Heart left ventricle (tissue), 16 donors: ENCODE measurements at regions of chr5 and their contacts with region 1.

Region 1: GRCh38 chr5:103119765-103120606 is at the starts of genes GIN1 and PPIP5K2:
- DNase-seq: peak; percentile 95 to 97 (median 96)
- ATAC-seq: peak; percentile 98 to 100 (median 99)
- H3K4me3 ChIP-seq: peak within 1 kb of the TSS; percentile 58 to 94 (median 80)
- H3K27ac ChIP-seq: peak within 1 kb of the TSS; percentile 89 to 99 (median 92)
- H3K4me1 ChIP-seq: peaks cover 0 to 40% (median 27%) of the 10 kb centered on the region in 12 donors
- H3K27me3 ChIP-seq: no peaks in the 10 kb centered on the region
- CTCF ChIP-seq: no peak
- POLR2A ChIP-seq: peak in 1 of 2 donors; percentile 71
- total RNA-seq, gene GIN1: 8.6 to 17.8 (median 13.3) TPM
- total RNA-seq, gene PPIP5K2: 25.2 to 59.8 (median 39.1) TPM

Region 2: GRCh38 chr5:102754767-102755431 is 365.1 kb before region 1 on chr5 and contains the start of gene PAM:
- intact Hi-C with region 1: loop called in 3 of 10 experiments (anchors 5 to 10 kb)
- DNase-seq: peak; percentile 85 to 92 (median 87)
- ATAC-seq: peak; percentile 85 to 95 (median 94)
- H3K4me3 ChIP-seq: peak within 1 kb of the TSS; percentile 56 to 97 (median 82)
- H3K27ac ChIP-seq: peak within 1 kb of the TSS; percentile 47 to 94 (median 85)
- H3K4me1 ChIP-seq: peaks cover 0 to 44% (median 25%) of the 10 kb centered on the region in 12 donors
- H3K27me3 ChIP-seq: no peaks in the 10 kb centered on the region
- CTCF ChIP-seq: peak in 1 of 12 donors; percentile 9
- POLR2A ChIP-seq: peak in 1 of 2 donors; percentile 53
- total RNA-seq, gene PAM: 578 to 1,548 (median 1,139) TPM

Region 3: GRCh38 chr5:102762095-102762534 is 357.9 kb before region 1 on chr5:
- intact Hi-C with region 1: loop called in 3 of 10 experiments (anchors 5 to 10 kb)
- DNase-seq: no peak
- ATAC-seq: peak in 2 of 4 donors; percentile 17 to 36
- H3K4me3 ChIP-seq: peak overlapping the region in 4 of 12 donors; percentile 8 to 21 (median 11)
- H3K27ac ChIP-seq: peak overlapping the region in 11 of 12 donors; percentile 3 to 72 (median 40)
- H3K4me1 ChIP-seq: peaks cover 4 to 74% (median 50%) of the 10 kb centered on the region in 12 donors
- H3K27me3 ChIP-seq: no peaks in the 10 kb centered on the region
- CTCF ChIP-seq: no peak
- POLR2A ChIP-seq: no peak

Region 4: GRCh38 chr5:103094737-103095136 is 25.2 kb before region 1 on chr5:
- intact Hi-C with region 1: loop called in 1 of 10 experiments (anchors 2 kb)
- DNase-seq: no peak
- ATAC-seq: peak; percentile 49 to 83 (median 75)
- H3K4me3 ChIP-seq: peak overlapping the region in 1 of 12 donors; percentile 21
- H3K27ac ChIP-seq: peak overlapping the region in 11 of 12 donors; percentile 9 to 65 (median 29)
- H3K4me1 ChIP-seq: peaks cover 0 to 11% (median 0%) of the 10 kb centered on the region in 12 donors
- H3K27me3 ChIP-seq: no peaks in the 10 kb centered on the region
- CTCF ChIP-seq: no peak
- POLR2A ChIP-seq: no peak

Region 5: DNA sequence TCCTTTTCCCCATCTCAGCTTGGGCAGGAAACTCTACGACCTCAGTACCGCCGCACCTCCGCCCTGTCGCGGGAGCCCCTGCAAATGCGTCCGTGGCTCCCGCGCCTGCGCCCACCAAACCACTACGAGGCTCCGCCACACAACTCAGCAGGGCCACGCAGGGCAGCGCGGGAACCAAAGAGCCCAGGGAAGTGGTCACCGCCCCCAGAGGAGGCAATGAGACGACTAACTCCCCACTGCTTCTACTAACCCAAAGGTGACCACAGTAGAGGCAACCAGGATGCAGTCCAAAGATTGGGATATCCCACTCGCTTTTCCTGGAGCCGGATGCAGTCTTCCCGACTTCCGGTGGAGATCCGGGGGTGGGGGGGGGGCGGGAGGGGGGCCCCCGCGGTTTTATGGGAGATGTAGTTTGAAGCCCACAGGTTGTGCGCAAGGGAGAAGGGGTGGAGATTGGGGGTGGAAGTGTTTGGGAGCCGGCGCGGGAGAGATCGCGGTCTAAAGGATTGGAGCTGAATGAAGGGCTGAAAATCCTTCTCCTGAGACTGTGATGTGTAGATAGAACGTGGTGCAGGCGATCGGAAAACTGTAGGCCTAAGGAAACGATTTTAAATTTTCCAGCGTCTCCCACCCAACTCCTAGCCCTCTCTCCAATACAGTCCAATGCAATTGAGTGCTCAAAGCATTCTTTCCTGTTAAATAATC is 442.6 kb after region 1 on chr5 and contains the start of gene NUDT12:
- intact Hi-C with region 1: loop called in 1 of 10 experiments (anchors 10 kb)
- DNase-seq: peak; percentile 63 to 83 (median 74)
- ATAC-seq: peak; percentile 92 to 97 (median 94)
- H3K4me3 ChIP-seq: peak within 1 kb of the TSS; percentile 48 to 89 (median 73)
- H3K27ac ChIP-seq: peak within 1 kb of the TSS; percentile 63 to 95 (median 86)
- H3K4me1 ChIP-seq: peaks cover 0 to 14% (median 5%) of the 10 kb centered on the region in 12 donors
- H3K27me3 ChIP-seq: no peaks in the 10 kb centered on the region
- CTCF ChIP-seq: no peak
- POLR2A ChIP-seq: peak in 1 of 2 donors; percentile 38
- total RNA-seq, gene NUDT12: 10.3 to 14.5 (median 11.8) TPM